ENCODE measurements at regions of chr9 and their contacts with region 1.

Region 1: GRCh38 chr9:101601904-101602765 is 7.4 kb upstream of the PPP3R2 start:
- DNase-seq: peak in 4 of 35 experiments; percentile 2 to 52 (median 10)
- ATAC-seq: peak in 1 of 4 experiments; percentile 45
- H3K4me3 ChIP-seq: no peak overlapping the region
- H3K4me3 Mint-ChIP-seq: peak overlapping the region; percentile 35 to 54 (median 46)
- H3K27ac ChIP-seq: no peak overlapping the region
- H3K27ac Mint-ChIP-seq: no peak overlapping the region
- H3K4me1 ChIP-seq: peaks cover 0 to 5% of the 10 kb centered on the region in 2 experiments
- H3K4me1 Mint-ChIP-seq: peaks cover 0 to 5% (median 4%) of the 10 kb centered on the region in 3 donors
- H3K27me3 ChIP-seq: peaks cover 2 to 3% of the 10 kb centered on the region in 2 experiments
- H3K27me3 Mint-ChIP-seq: peaks cover 6 to 10% of the 10 kb centered on the region in 2 donors

Region 2: DNA sequence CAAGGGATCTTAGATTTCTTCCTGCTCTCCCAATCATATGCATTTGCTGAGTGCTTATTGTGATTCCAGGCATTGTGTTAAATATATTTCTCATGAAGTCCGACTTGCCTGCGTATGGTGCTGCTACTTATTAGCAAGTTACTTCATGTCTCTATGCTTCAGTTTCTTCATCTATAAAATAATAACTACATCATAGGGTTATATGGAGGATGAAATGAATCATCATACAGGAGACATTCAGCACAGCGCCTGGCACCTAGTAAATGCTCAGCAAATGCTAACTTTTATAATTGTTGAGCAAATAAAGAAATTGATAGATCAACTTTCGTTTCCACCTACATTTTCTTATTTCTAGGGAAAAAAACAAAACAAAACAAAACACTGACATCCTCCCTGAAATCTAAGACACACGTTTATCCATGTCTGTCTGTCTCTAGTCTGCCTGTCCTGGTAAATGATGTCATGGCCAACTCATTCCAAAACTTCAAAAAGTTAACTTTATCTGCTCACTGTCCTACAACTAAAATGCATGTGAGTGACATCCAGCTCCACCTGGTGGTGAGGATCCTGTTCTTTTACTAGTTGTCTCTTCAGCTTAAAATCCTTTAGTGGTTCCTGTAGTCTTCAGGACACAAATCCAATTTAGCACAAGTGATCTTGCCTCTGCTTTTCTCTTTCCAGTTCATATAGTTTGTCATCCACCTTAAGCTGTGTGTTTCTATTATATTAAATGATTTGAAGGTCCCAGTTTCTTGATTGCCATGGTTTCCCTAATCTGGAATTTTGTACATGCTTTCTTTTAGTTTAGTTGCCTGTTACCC is 35.0 kb before region 1 on chr9:
- CTCF ChIA-PET with region 1: interaction called in 1 of 2 experiments, 11 read pairs
- POLR2A ChIA-PET with region 1: no interaction called
- DNase-seq: peak in 24 of 35 experiments; percentile 8 to 61 (median 28)
- ATAC-seq: no peak
- H3K4me3 ChIP-seq: no peak overlapping the region
- H3K4me3 Mint-ChIP-seq: peak overlapping the region in 1 of 3 donors; percentile 26
- H3K27ac ChIP-seq: no peak overlapping the region
- H3K27ac Mint-ChIP-seq: peak overlapping the region; percentile 68 to 71
- H3K4me1 ChIP-seq: peaks cover 30 to 35% of the 10 kb centered on the region in 2 experiments
- H3K4me1 Mint-ChIP-seq: peaks cover 50 to 62% (median 55%) of the 10 kb centered on the region in 3 donors
- H3K27me3 ChIP-seq: no peaks in the 10 kb centered on the region
- H3K27me3 Mint-ChIP-seq: no peaks in the 10 kb centered on the region

Region 3: GRCh38 chr9:101618698-101619097 is 16.6 kb after region 1 on chr9:
- CTCF ChIA-PET with region 1: interaction called, 3 read pairs
- POLR2A ChIA-PET with region 1: interaction called, 3 to 13 read pairs
- DNase-seq: no peak
- ATAC-seq: no peak
- H3K4me3 ChIP-seq: no peak overlapping the region
- H3K4me3 Mint-ChIP-seq: no peak overlapping the region
- H3K27ac ChIP-seq: no peak overlapping the region
- H3K27ac Mint-ChIP-seq: no peak overlapping the region
- H3K4me1 ChIP-seq: no peaks in the 10 kb centered on the region
- H3K4me1 Mint-ChIP-seq: no peaks in the 10 kb centered on the region
- H3K27me3 ChIP-seq: no peaks in the 10 kb centered on the region
- H3K27me3 Mint-ChIP-seq: peaks cover 0 to 2% of the 10 kb centered on the region in 2 donors

Measured in T-cell (primary cell).